ENCODE measurements at regions of chr15 and their contacts with region 1.

Region 1: DNA sequence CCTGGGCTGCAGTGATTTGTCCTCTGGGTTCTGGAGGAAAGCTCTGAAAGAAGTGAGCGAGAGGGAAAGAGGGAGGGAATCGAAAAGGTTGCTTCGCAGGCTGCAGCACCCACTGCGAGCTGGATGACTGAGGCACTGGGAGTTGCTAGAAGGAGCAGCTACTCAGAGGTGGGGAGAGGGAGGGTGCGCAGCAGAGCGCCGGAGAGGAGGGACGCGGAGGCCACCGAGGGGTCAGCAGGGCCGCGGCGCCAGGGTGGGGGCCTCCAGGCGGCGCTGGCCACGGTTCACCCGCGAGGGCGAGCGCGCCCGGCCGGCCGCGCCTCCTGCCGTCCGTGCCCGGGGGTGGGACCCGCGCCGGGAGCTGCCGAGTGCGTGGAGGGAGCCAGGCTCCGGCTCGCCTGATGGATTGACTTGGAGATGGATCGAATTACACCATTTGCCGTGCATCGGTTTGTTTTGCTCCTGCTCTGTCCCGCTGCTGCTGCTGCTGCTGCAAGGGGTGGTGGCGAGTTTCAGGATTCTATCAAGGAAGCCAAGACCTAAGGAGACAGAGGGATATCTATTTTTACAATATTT is at the start of gene SEMA6D:
- DNase-seq: peak; percentile 76 to 89
- ATAC-seq: peak; percentile 82 to 87 (median 84)
- H3K4me3 ChIP-seq: peak within 1 kb of the TSS; percentile 74
- H3K27ac ChIP-seq: peak within 1 kb of the TSS; percentile 91
- H3K4me1 ChIP-seq: peaks cover 28% of the 10 kb centered on the region
- H3K27me3 ChIP-seq: no peaks in the 10 kb centered on the region
- CTCF ChIP-seq: peak; percentile 63
- total RNA-seq, gene SEMA6D: 3.5 to 7.4 (median 3.7) TPM

Region 2: DNA sequence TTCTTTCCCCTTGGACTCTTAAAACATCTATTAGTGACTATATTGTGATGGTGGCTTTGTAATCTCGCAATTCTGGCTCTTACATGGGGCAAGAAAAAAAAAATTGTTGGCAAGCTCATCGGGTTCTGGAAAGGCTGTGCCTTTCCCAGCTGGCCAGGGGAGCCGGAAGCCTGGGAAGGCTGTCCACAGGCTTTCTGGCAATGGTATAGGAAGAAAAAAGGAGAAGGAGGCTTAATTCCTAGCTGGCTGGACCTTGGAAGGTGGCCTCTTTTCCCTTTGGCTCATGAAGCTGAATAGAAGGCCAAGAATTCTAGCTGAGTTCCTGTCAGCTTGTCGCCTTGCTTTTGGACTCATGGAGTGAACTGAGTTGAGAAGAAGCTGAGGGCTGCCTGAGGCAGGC is 243.3 kb before region 1 on chr15:
- intact Hi-C with region 1: loop called in 1 of 2 experiments (anchors 5 kb)
- DNase-seq: peak; percentile 48 to 68
- ATAC-seq: peak; percentile 44 to 81 (median 70)
- H3K4me3 ChIP-seq: no peak overlapping the region
- H3K27ac ChIP-seq: no peak overlapping the region
- H3K4me1 ChIP-seq: peaks cover 18% of the 10 kb centered on the region
- H3K27me3 ChIP-seq: no peaks in the 10 kb centered on the region
- CTCF ChIP-seq: no peak

Region 3: DNA sequence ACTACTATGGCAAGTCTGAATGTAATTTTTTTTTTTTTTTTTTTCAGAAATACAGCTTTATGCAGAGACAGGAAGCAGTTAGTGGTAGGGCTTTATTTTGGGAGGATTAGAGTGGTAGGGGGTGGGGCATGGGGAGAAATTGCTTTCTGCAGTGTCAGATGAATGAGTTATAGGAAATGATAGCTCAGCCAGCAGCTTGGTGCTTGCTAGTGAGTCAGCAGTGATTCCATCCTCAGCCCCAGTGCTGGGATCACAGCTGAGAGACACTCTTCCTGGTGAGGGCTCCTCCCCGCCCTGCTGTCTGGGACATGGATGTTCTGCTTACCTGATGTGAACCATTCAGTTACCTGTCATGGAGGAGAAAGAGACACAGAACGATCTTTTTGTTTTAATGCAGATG is 39.7 kb after region 1 on chr15:
- intact Hi-C with region 1: loop called in 1 of 2 experiments (anchors 5 kb)
- DNase-seq: peak; percentile 42 to 79
- ATAC-seq: peak; percentile 98 to 100 (median 100)
- H3K4me3 ChIP-seq: no peak overlapping the region
- H3K27ac ChIP-seq: peak overlapping the region; percentile 75
- H3K4me1 ChIP-seq: peaks cover 27% of the 10 kb centered on the region
- H3K27me3 ChIP-seq: no peaks in the 10 kb centered on the region
- CTCF ChIP-seq: no peak

Region 4: GRCh38 chr15:47768735-47769134 is 51.6 kb after region 1 on chr15:
- intact Hi-C with region 1: no loop called
- DNase-seq: no peak
- ATAC-seq: no peak
- H3K4me3 ChIP-seq: no peak overlapping the region
- H3K27ac ChIP-seq: peak overlapping the region; percentile 5
- H3K4me1 ChIP-seq: peaks cover 13% of the 10 kb centered on the region
- H3K27me3 ChIP-seq: no peaks in the 10 kb centered on the region
- CTCF ChIP-seq: no peak

Region 5: GRCh38 chr15:47792231-47792630 is 75.1 kb after region 1 on chr15:
- intact Hi-C with region 1: no loop called
- DNase-seq: no peak
- ATAC-seq: no peak
- H3K4me3 ChIP-seq: no peak overlapping the region
- H3K27ac ChIP-seq: no peak overlapping the region
- H3K4me1 ChIP-seq: peaks cover 3% of the 10 kb centered on the region
- H3K27me3 ChIP-seq: no peaks in the 10 kb centered on the region
- CTCF ChIP-seq: no peak

Region 6: GRCh38 chr15:47839233-47839825 is 122.2 kb after region 1 on chr15:
- intact Hi-C with region 1: loop called in 1 of 2 experiments (anchors 10 kb)
- DNase-seq: no peak
- ATAC-seq: peak; percentile 73 to 93 (median 82)
- H3K4me3 ChIP-seq: no peak overlapping the region
- H3K27ac ChIP-seq: no peak overlapping the region
- H3K4me1 ChIP-seq: peaks cover 11% of the 10 kb centered on the region
- H3K27me3 ChIP-seq: no peaks in the 10 kb centered on the region
- CTCF ChIP-seq: no peak